Naive thymus-derived CD8-positive, alpha-beta T cell (primary cell): ENCODE measurements at regions of chr6 and their contacts with region 1.

Region 1: GRCh38 chr6:112029045-112029822 is 24.7 kb upstream of the CCN6 start:
- DNase-seq: peak; percentile 13 to 70 (median 27)
- ATAC-seq: no peak
- H3K4me3 Mint-ChIP-seq: peak overlapping the region in 8 of 10 donors; percentile 45 to 77 (median 65)
- H3K27ac Mint-ChIP-seq: peak overlapping the region; percentile 95 to 99 (median 98)
- H3K4me1 Mint-ChIP-seq: peaks cover 44 to 80% (median 75%) of the 10 kb centered on the region in 4 donors
- H3K27me3 Mint-ChIP-seq: no peaks in the 10 kb centered on the region

Region 2: GRCh38 chr6:112010328-112010727 is 18.9 kb before region 1 on chr6:
- POLR2A ChIA-PET with region 1: interaction called, 41 read pairs
- DNase-seq: peak in 6 of 10 donors; percentile 4 to 68 (median 34)
- ATAC-seq: peak; percentile 62 to 93
- H3K4me3 Mint-ChIP-seq: no peak overlapping the region
- H3K27ac Mint-ChIP-seq: peak overlapping the region in 6 of 10 donors; percentile 1 to 51 (median 22)
- H3K4me1 Mint-ChIP-seq: peaks cover 5 to 12% (median 6%) of the 10 kb centered on the region in 4 donors
- H3K27me3 Mint-ChIP-seq: no peaks in the 10 kb centered on the region

Region 3: GRCh38 chr6:112018619-112019416 is 10.4 kb before region 1 on chr6:
- POLR2A ChIA-PET with region 1: interaction called, 26 read pairs
- DNase-seq: no peak
- ATAC-seq: no peak
- H3K4me3 Mint-ChIP-seq: no peak overlapping the region
- H3K27ac Mint-ChIP-seq: peak overlapping the region in 1 of 10 donors; percentile 21
- H3K4me1 Mint-ChIP-seq: peaks cover 11 to 22% (median 16%) of the 10 kb centered on the region in 4 donors
- H3K27me3 Mint-ChIP-seq: no peaks in the 10 kb centered on the region

Region 4: GRCh38 chr6:112054555-112055160 is 25.4 kb after region 1 on chr6:
- POLR2A ChIA-PET with region 1: no interaction called
- DNase-seq: no peak
- ATAC-seq: no peak
- H3K4me3 Mint-ChIP-seq: no peak overlapping the region
- H3K27ac Mint-ChIP-seq: peak overlapping the region in 1 of 10 donors; percentile 19
- H3K4me1 Mint-ChIP-seq: peaks cover 0 to 1% (median 0%) of the 10 kb centered on the region in 4 donors
- H3K27me3 Mint-ChIP-seq: peaks cover 0 to 7% (median 1%) of the 10 kb centered on the region in 5 donors